MCF 10A (cell line): ENCODE measurements at regions of chr15 and their contacts with region 1.

Region 1: DNA sequence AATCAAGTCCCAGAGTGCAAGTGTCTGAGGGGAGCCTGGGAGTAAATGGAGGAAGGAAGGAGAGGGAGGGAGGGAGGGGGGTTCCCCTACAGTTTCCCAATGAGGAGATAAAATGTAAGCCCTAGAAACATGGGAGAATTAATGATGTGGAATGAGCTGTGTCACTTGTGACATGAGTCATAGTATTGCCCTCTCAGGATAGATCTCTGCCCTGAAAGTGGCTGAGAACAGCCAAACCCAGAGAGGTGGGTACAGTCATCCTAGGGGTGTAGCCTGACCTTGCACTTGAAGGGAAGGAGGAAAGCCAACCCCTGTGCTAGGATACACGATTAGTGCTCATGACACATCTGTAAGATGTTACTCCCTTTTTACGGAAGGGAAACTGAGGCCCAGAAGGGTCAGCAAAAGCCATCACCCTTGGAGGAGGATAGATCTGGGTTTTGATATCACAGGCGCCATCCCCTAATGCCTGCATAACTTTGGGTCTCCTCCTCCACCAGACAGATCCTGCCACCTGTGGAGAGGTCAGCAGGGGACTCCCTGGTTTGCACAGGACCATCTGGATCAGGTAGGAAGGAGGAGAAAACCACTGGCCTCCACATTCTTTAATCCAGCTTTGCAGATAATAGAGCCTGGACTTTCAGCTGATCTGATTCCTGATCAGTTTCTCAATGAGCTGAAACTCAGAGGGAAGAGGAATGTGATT is 23.1 kb upstream of the USP3 start:
- DNase-seq: peak; percentile 56
- H3K4me3 Mint-ChIP-seq: no peak overlapping the region
- H3K27ac Mint-ChIP-seq: no peak overlapping the region
- H3K4me1 Mint-ChIP-seq: peaks cover 16% of the 10 kb centered on the region
- H3K27me3 Mint-ChIP-seq: no peaks in the 10 kb centered on the region
- CTCF ChIP-seq: no peak

Region 2: GRCh38 chr15:63277038-63277892 is 204.0 kb before region 1 on chr15 and contains the start of gene APH1B:
- CTCF ChIA-PET with region 1: no interaction called
- POLR2A ChIA-PET with region 1: no interaction called
- intact Hi-C with region 1: no loop called
- DNase-seq: peak; percentile 62
- H3K4me3 Mint-ChIP-seq: peak within 1 kb of the TSS; percentile 78
- H3K27ac Mint-ChIP-seq: peak within 1 kb of the TSS; percentile 55
- H3K4me1 Mint-ChIP-seq: peaks cover 10% of the 10 kb centered on the region
- H3K27me3 Mint-ChIP-seq: no peaks in the 10 kb centered on the region
- CTCF ChIP-seq: no peak
- total RNA-seq, gene APH1B: 5.2 and 8.2 TPM in 2 replicates

Region 3: GRCh38 chr15:63466378-63467192 is 14.7 kb before region 1 on chr15:
- CTCF ChIA-PET with region 1: interaction called, 22 read pairs
- POLR2A ChIA-PET with region 1: interaction called, 9 read pairs
- intact Hi-C with region 1: no loop called
- DNase-seq: peak; percentile 82
- H3K4me3 Mint-ChIP-seq: no peak overlapping the region
- H3K27ac Mint-ChIP-seq: no peak overlapping the region
- H3K4me1 Mint-ChIP-seq: no peaks in the 10 kb centered on the region
- H3K27me3 Mint-ChIP-seq: no peaks in the 10 kb centered on the region
- CTCF ChIP-seq: peak; percentile 61

Region 4: GRCh38 chr15:63497642-63498467 is 16.6 kb after region 1 on chr15:
- CTCF ChIA-PET with region 1: interaction called, 9 read pairs
- POLR2A ChIA-PET with region 1: interaction called, 222 read pairs
- intact Hi-C with region 1: loop called (anchors 1 kb)
- DNase-seq: no peak
- H3K4me3 Mint-ChIP-seq: no peak overlapping the region
- H3K27ac Mint-ChIP-seq: no peak overlapping the region
- H3K4me1 Mint-ChIP-seq: peaks cover 27% of the 10 kb centered on the region
- H3K27me3 Mint-ChIP-seq: no peaks in the 10 kb centered on the region
- CTCF ChIP-seq: no peak

Region 5: DNA sequence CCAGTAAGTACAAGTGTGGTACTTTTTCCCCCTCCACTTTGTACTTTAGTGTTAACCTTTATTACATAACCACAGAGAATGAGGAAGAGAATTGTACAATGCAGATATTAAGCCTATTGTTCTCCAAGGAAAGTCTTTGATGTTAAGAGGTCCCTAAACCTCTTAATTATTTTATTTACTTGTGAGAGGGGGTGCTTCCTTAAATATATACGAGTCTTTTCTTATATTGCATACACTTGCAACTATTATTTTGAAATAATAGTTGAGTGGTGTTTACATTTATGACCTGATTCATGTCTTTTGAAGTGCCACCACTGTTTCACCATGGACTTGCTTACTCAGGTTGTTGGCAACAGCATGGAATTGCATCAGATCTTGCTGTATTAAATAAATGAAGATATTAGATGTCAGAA is 33.3 kb after region 1 on chr15:
- CTCF ChIA-PET with region 1: interaction called, 3 read pairs
- POLR2A ChIA-PET with region 1: interaction called, 54 read pairs
- intact Hi-C with region 1: no loop called
- DNase-seq: peak; percentile 93
- H3K4me3 Mint-ChIP-seq: peak overlapping the region; percentile 51
- H3K27ac Mint-ChIP-seq: peak overlapping the region; percentile 94
- H3K4me1 Mint-ChIP-seq: peaks cover 73% of the 10 kb centered on the region
- H3K27me3 Mint-ChIP-seq: no peaks in the 10 kb centered on the region
- CTCF ChIP-seq: no peak

Region 6: DNA sequence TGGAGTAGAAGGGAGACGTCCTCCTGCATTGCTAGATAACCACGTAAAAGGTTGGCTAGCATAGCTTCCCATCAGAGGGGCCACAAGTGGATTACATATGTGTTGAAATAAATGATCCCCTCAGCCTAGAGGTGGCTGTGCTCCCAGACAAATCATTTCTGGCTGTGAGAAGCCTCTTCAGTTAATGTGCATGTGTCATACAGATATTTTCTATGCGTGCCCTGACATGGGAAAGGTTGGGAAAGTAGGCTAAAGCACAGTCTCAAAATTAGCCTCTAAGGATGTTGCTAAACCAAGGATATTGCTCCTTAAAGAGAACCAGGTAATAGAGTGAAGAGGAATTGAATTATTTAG is 40.9 kb after region 1 on chr15:
- CTCF ChIA-PET with region 1: interaction called, 3 read pairs
- POLR2A ChIA-PET with region 1: interaction called, 54 read pairs
- intact Hi-C with region 1: no loop called
- DNase-seq: peak; percentile 73
- H3K4me3 Mint-ChIP-seq: no peak overlapping the region
- H3K27ac Mint-ChIP-seq: peak overlapping the region; percentile 41
- H3K4me1 Mint-ChIP-seq: peaks cover 64% of the 10 kb centered on the region
- H3K27me3 Mint-ChIP-seq: no peaks in the 10 kb centered on the region
- CTCF ChIP-seq: no peak

Region 7: DNA sequence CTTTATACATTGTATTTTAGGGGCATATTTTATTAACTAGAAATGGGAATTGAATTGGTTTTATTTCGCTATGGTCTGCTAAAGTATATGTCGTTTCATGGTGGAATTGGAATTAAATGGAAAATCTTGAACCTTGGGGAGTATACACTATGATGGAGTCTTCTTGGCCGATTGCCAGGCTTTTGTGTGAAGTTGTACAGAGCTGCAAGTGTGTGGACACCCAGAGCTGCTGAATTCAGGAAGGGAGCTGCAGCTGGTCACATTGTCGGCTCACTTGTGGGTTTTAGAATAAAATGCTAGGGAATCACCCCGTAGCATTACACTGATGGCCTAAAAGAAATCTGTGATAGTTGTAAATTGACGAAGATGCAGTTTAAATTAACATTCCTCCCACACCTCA is 58.3 kb after region 1 on chr15:
- CTCF ChIA-PET with region 1: no interaction called
- POLR2A ChIA-PET with region 1: no interaction called
- intact Hi-C with region 1: no loop called
- DNase-seq: no peak
- H3K4me3 Mint-ChIP-seq: no peak overlapping the region
- H3K27ac Mint-ChIP-seq: no peak overlapping the region
- H3K4me1 Mint-ChIP-seq: peaks cover 5% of the 10 kb centered on the region
- H3K27me3 Mint-ChIP-seq: no peaks in the 10 kb centered on the region
- CTCF ChIP-seq: no peak

Region 8: GRCh38 chr15:63553388-63553791 is 72.1 kb after region 1 on chr15:
- CTCF ChIA-PET with region 1: no interaction called
- POLR2A ChIA-PET with region 1: interaction called, 22 read pairs
- intact Hi-C with region 1: no loop called
- DNase-seq: peak; percentile 62
- H3K4me3 Mint-ChIP-seq: peak overlapping the region; percentile 30
- H3K27ac Mint-ChIP-seq: peak overlapping the region; percentile 6
- H3K4me1 Mint-ChIP-seq: peaks cover 22% of the 10 kb centered on the region
- H3K27me3 Mint-ChIP-seq: no peaks in the 10 kb centered on the region
- CTCF ChIP-seq: no peak

Region 9: GRCh38 chr15:63970621-63971426 is 489.6 kb after region 1 on chr15:
- CTCF ChIA-PET with region 1: no interaction called
- POLR2A ChIA-PET with region 1: no interaction called
- intact Hi-C with region 1: no loop called
- DNase-seq: no peak
- H3K4me3 Mint-ChIP-seq: no peak overlapping the region
- H3K27ac Mint-ChIP-seq: no peak overlapping the region
- H3K4me1 Mint-ChIP-seq: peaks cover 18% of the 10 kb centered on the region
- H3K27me3 Mint-ChIP-seq: no peaks in the 10 kb centered on the region
- CTCF ChIP-seq: no peak